HCT116 (cell line): ENCODE measurements at regions of chrX and their contacts with region 1.

Region 1: GRCh38 chrX:68511255-68511654 is 12.4 kb downstream of the YIPF6 start:
- DNase-seq: no peak
- ATAC-seq: no peak
- H3K4me3 ChIP-seq: no peak overlapping the region
- H3K27ac ChIP-seq: no peak overlapping the region
- H3K4me1 ChIP-seq: no peaks in the 10 kb centered on the region
- H3K27me3 ChIP-seq: no peaks in the 10 kb centered on the region
- CTCF ChIP-seq: peak; percentile 41 to 63 (median 56); a peak in 5 of 6 replicates
- POLR2A ChIP-seq: no peak
- RAD21 ChIP-seq: peak; percentile 67

Region 2: DNA sequence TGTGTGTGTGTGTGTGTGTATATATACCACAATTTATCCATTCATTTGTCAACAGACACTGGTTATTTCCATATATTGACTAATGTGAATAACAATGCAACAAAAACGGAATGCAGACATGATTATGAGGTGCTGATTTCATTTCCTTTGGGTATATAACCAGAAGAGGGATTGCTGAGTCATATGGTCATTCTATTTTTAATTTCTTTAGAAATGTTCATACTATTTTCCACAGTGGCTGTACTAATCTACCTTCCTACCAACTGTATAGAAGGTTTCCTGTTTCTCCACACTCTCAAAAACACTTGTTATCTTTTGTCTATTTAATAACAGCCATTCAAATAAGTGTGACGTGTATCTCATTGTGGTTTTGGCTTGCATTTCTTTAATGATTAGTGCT is 347.8 kb before region 1 on chrX:
- CTCF ChIA-PET with region 1: no interaction called
- POLR2A ChIA-PET with region 1: no interaction called
- RAD21 ChIA-PET with region 1: no interaction called
- intact Hi-C with region 1: no loop called
- DNase-seq: no peak
- ATAC-seq: no peak
- H3K4me3 ChIP-seq: no peak overlapping the region
- H3K27ac ChIP-seq: no peak overlapping the region
- H3K4me1 ChIP-seq: no peaks in the 10 kb centered on the region
- H3K27me3 ChIP-seq: no peaks in the 10 kb centered on the region
- CTCF ChIP-seq: no peak
- POLR2A ChIP-seq: no peak
- RAD21 ChIP-seq: no peak

Region 3: DNA sequence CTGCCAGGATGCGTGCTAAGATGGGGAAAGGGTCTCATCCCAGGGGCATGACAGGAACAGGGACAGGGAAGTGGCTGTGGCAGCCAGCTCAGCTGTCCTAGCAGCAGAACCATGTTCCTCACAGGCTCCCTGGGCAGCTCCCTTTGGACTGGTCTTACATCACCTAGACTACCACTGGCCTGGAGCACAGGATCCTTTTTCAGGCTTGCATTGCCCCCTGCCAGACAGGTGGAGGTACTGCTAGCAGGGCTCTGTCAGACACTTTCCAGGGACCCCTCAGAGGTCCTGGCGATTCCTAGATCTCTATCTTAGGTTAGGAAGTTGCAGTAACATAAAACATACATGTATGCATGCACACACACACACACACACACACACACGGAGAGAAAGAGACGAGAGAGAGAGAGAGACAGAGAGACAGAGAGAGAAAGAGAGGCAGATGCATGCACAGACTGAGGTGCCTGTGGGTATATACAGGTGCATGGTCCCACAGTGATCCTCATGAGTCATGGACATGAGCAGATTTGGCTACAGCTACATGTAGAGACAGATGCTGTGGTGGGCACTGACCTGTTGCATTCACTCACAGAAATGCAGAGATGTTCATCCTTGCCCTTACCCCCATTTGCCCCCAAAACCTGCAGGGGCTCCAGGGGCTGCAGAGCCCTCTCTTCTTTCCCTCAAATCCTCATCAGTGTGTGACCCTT is 199.8 kb after region 1 on chrX:
- CTCF ChIA-PET with region 1: interaction called, 11 read pairs
- POLR2A ChIA-PET with region 1: no interaction called
- RAD21 ChIA-PET with region 1: no interaction called
- intact Hi-C with region 1: loop called (anchors 1 kb)
- DNase-seq: peak; percentile 32
- ATAC-seq: peak; percentile 89
- H3K4me3 ChIP-seq: no peak overlapping the region
- H3K27ac ChIP-seq: no peak overlapping the region
- H3K4me1 ChIP-seq: no peaks in the 10 kb centered on the region
- H3K27me3 ChIP-seq: no peaks in the 10 kb centered on the region
- CTCF ChIP-seq: peak; percentile 50 to 59 (median 55); a peak in 5 of 6 replicates
- POLR2A ChIP-seq: no peak
- RAD21 ChIP-seq: peak; percentile 82

Region 4: DNA sequence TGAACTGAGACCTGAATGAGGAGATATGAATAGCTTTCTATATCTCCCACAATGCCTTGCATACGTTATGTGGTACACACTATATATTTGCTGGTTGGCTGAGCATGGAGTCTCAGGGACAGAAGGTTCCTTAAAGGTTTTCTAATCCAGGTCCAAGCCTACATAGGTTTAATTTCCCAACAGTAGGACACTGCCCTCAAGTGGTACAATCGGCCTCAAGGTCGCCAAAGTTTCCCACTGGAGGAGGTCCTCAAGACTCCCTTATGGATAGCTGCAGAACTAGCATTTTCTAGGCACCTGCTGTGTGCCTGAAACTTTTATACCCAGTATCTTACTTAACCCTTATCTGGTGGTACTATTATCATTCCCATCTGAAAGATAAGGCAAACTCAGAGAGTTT is 296.6 kb after region 1 on chrX:
- CTCF ChIA-PET with region 1: no interaction called
- POLR2A ChIA-PET with region 1: no interaction called
- RAD21 ChIA-PET with region 1: no interaction called
- intact Hi-C with region 1: loop called (anchors 5 kb)
- DNase-seq: peak; percentile 18
- ATAC-seq: peak; percentile 75
- H3K4me3 ChIP-seq: no peak overlapping the region
- H3K27ac ChIP-seq: no peak overlapping the region
- H3K4me1 ChIP-seq: no peaks in the 10 kb centered on the region
- H3K27me3 ChIP-seq: no peaks in the 10 kb centered on the region
- CTCF ChIP-seq: peak; percentile 34 to 47 (median 40); a peak in 4 of 6 replicates
- POLR2A ChIP-seq: no peak
- RAD21 ChIP-seq: peak; percentile 61

Region 5: GRCh38 chrX:69424161-69424560 is 912.9 kb after region 1 on chrX:
- CTCF ChIA-PET with region 1: no interaction called
- POLR2A ChIA-PET with region 1: no interaction called
- RAD21 ChIA-PET with region 1: no interaction called
- intact Hi-C with region 1: no loop called
- DNase-seq: peak; percentile 2
- ATAC-seq: no peak
- H3K4me3 ChIP-seq: no peak overlapping the region
- H3K27ac ChIP-seq: no peak overlapping the region
- H3K4me1 ChIP-seq: no peaks in the 10 kb centered on the region
- H3K27me3 ChIP-seq: peaks cover 22% of the 10 kb centered on the region
- CTCF ChIP-seq: peak; percentile 15 to 34 (median 21); a peak in 3 of 6 replicates
- POLR2A ChIP-seq: no peak
- RAD21 ChIP-seq: peak; percentile 44